Tibial artery (tissue), 4 donors: ENCODE measurements at regions of chr14 and their contacts with region 1.

Region 1: DNA sequence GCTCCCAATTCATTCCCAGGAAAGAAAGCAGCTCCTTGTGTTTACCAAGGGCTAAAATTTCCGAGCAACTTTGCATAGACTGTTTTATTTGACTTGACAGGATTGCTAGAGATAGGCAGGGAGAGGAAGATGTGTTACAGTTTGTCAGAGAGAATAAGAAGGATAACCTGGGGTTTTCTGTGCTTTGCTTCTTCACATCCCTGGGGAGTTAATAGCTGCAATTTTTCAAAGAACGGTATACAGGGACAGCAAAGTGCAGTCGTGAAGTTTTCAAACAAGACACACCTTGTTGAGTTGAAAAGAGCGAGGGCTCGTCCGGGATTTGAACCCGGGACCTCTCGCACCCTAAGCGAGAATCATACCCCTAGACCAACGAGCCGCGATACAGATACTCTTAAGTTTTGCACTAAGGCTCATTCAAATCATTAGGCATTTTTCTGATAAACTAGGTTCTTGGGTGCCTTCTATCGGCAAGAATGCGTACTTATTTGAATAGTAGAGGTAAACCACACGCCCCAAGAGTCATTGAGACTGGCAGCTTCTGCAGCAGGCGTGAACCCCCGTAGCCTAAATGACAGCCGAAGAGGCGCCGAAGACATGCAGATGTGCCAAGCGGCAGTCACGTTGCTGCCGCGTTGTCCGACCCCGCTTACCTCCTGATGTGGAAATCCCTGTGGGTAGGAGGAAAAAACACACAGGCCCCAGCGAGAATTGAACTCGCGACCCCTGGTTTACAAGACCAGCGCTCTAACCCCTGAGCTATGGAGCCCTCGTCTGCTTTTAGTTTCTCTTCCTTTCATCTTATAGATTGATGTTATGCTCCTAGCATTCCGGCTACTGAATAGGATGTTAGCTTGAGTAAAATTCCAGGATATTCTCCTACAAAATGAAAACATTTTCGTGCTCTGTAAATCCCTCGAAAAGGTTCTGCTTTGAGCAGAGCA is 22.2 kb upstream of the RNASE12 start:
- DNase-seq: peak; percentile 82 to 88
- H3K4me3 ChIP-seq: peak overlapping the region; percentile 55 to 59
- H3K27ac ChIP-seq: peak overlapping the region; percentile 70 to 75
- H3K4me1 ChIP-seq: peaks cover 0 to 22% (median 12%) of the 10 kb centered on the region in 4 donors
- H3K27me3 ChIP-seq: no peaks in the 10 kb centered on the region
- CTCF ChIP-seq: peak; percentile 79 to 99

Region 2: GRCh38 chr14:20327005-20327869 is 286.1 kb before region 1 on chr14:
- intact Hi-C with region 1: loop called (anchors 5 kb)
- DNase-seq: no peak
- H3K4me3 ChIP-seq: no peak overlapping the region
- H3K27ac ChIP-seq: peak overlapping the region in 1 of 2 donors; percentile 33
- H3K4me1 ChIP-seq: peaks cover 0 to 48% (median 10%) of the 10 kb centered on the region in 4 donors
- H3K27me3 ChIP-seq: no peaks in the 10 kb centered on the region
- CTCF ChIP-seq: peak; percentile 60 to 62

Region 3: GRCh38 chr14:20343092-20343861 is 270.1 kb before region 1 on chr14 and contains the start of gene PARP2:
- intact Hi-C with region 1: loop called (anchors 5 kb)
- DNase-seq: peak; percentile 97 to 98
- H3K4me3 ChIP-seq: peak within 1 kb of the TSS; percentile 71 to 72
- H3K27ac ChIP-seq: peak within 1 kb of the TSS; percentile 82 to 90
- H3K4me1 ChIP-seq: peaks cover 0 to 12% (median 7%) of the 10 kb centered on the region in 4 donors
- H3K27me3 ChIP-seq: no peaks in the 10 kb centered on the region
- CTCF ChIP-seq: no peak

Region 4: DNA sequence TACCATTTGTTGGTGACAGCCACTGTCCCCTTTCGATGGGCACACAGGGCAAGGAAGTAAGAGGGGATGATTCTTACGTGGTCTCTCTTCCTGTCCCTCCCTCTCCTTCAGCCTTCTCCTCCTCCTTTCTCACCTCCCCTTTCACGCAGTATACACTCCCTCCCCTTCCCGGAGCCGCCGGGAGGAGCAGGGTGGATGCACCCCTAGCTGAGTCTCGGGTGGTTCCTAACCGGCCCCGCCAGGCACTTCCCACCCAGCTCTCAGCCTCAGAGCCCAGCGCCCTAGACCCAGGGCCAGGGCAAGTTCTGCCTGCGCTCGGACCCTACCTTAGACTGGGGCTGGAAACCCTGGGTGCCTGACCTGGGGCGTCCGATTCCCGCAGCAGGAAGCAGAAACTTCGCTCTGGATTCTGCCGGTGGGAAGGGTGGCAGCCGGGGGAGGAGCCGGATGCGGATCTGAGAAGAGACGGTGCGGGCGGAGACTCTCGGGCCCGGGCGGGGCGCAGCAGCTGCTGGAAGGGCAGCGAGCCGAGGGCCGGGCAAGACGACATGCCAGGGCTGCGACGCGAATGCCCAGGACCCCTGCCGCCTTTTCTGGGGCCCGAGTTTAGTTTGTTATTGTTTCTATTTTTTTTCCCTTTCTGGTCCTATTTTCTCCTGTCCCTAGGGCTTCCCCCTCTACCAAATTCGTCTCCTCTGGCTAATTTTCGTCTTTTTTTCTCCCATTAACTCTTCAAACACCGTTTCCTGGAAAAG is 200.1 kb before region 1 on chr14 and contains the start of gene TEP1:
- intact Hi-C with region 1: loop called (anchors 1 kb)
- DNase-seq: peak; percentile 92 to 94
- H3K4me3 ChIP-seq: peak within 1 kb of the TSS; percentile 75 to 91
- H3K27ac ChIP-seq: peak within 1 kb of the TSS; percentile 94
- H3K4me1 ChIP-seq: peaks cover 0 to 19% (median 12%) of the 10 kb centered on the region in 4 donors
- H3K27me3 ChIP-seq: no peaks in the 10 kb centered on the region
- CTCF ChIP-seq: peak in 1 of 2 experiments; percentile 8

Region 5: DNA sequence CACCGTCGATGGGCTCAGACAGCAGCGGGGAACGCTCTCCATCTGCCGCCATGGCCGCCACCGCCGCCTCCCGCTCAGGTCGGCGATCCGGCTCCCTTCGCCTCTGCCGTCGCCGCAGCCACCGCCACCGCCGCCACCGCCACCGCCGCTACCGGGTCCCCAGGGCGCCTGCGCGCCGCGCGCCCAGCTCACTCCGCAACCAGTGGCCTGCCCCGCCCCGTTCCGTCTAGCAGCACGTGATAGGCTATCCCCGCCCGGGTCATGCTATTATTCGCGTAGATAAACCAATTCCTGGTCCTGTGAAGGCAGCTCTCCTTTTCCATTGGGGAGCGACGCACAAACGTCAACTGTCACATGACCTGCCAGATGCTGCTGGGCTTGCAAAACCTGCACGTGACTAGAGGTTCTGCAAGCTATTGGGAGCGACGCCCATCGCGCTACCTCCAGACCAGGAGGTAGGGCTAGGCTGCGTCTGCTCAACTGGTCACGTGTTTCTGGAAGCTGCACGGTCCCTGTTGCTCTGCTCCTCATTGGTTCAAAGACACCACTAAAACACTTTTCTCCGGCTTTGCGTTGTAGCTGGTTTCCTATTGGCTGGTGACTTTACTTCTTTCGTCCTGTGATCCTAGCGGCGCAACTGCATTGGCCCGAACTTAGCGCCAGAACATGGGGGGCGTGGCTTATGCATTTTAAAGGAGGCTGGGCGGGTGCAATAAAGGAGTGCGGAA is 151.9 kb before region 1 on chr14 and contains the start of gene PIP4P1:
- intact Hi-C with region 1: loop called (anchors 5 kb)
- DNase-seq: peak; percentile 100
- H3K4me3 ChIP-seq: peak within 1 kb of the TSS; percentile 99
- H3K27ac ChIP-seq: peak within 1 kb of the TSS; percentile 97
- H3K4me1 ChIP-seq: peaks cover 0 to 27% (median 19%) of the 10 kb centered on the region in 4 donors
- H3K27me3 ChIP-seq: no peaks in the 10 kb centered on the region
- CTCF ChIP-seq: peak in 1 of 2 experiments; percentile 50

Region 6: DNA sequence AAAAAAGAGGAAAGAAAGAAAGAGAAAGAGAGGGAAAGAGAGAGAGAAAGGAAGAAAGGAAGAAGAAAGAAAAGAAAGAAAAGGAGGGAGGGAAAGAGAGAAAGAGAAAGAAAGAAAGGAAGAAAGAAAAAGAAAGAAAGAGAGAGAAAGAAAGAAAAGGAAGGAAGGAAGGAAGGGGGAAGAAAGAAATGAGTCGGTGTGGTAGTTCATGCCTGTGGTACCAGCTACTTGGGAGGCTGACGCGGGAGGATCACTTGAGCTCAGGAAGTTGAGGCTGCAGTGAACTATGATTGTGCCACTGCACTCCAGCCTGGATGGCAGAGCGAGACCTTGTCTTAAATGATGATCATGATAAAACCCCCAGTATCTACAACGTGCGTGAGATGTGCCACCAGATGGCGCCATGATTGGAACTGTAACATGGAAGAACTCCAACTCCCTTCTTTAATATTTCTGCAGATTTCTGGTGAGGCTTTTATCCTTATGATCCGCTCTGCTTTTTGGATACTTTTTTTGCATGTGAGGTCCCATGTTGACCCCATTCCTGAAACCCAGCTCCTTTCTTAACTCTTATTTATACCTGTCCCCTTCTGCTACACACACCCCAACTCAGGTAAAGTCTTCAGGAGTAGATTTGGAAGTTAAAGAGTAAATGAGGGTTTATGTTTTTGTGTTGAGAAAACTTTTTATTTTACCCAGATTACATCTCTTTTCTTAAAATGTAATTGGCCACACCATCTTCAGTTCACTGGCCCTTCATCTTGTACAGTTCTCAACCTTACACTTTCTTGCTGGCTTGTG is 82.4 kb before region 1 on chr14:
- intact Hi-C with region 1: loop called (anchors 5 kb)
- DNase-seq: peak; percentile 79 to 83
- H3K4me3 ChIP-seq: no peak overlapping the region
- H3K27ac ChIP-seq: no peak overlapping the region
- H3K4me1 ChIP-seq: no peaks in the 10 kb centered on the region
- H3K27me3 ChIP-seq: peaks cover 0 to 3% of the 10 kb centered on the region in 2 donors
- CTCF ChIP-seq: peak; percentile 56 to 61